ENCODE measurements at regions of chr22 and their contacts with region 1.

Region 1: GRCh38 chr22:22877523-22878210 is 9.9 kb upstream of the IGLL5 start:
- DNase-seq: peak; percentile 56 to 91 (median 81)
- ATAC-seq: peak; percentile 59
- H3K4me3 ChIP-seq: no peak overlapping the region
- H3K4me3 Mint-ChIP-seq: no peak overlapping the region
- H3K27ac ChIP-seq: no peak overlapping the region
- H3K27ac Mint-ChIP-seq: peak overlapping the region; percentile 41
- H3K4me1 ChIP-seq: no peaks in the 10 kb centered on the region
- H3K4me1 Mint-ChIP-seq: peaks cover 7% of the 10 kb centered on the region
- H3K27me3 ChIP-seq: no peaks in the 10 kb centered on the region
- H3K27me3 Mint-ChIP-seq: no peaks in the 10 kb centered on the region
- CTCF ChIP-seq: peak; percentile 78

Region 2: GRCh38 chr22:22770280-22770871 is 107.3 kb before region 1 on chr22:
- CTCF ChIA-PET with region 1: interaction called, 18 read pairs
- POLR2A ChIA-PET with region 1: no interaction called
- intact Hi-C with region 1: no loop called
- DNase-seq: peak in 6 of 9 experiments; percentile 41 to 66 (median 59)
- ATAC-seq: peak; percentile 70
- H3K4me3 ChIP-seq: no peak overlapping the region
- H3K4me3 Mint-ChIP-seq: no peak overlapping the region
- H3K27ac ChIP-seq: peak overlapping the region in 1 of 2 experiments; percentile 60
- H3K27ac Mint-ChIP-seq: peak overlapping the region; percentile 73
- H3K4me1 ChIP-seq: no peaks in the 10 kb centered on the region
- H3K4me1 Mint-ChIP-seq: peaks cover 56% of the 10 kb centered on the region
- H3K27me3 ChIP-seq: no peaks in the 10 kb centered on the region
- H3K27me3 Mint-ChIP-seq: no peaks in the 10 kb centered on the region
- CTCF ChIP-seq: peak; percentile 74

Region 3: GRCh38 chr22:22855617-22856308 is 21.9 kb before region 1 on chr22:
- CTCF ChIA-PET with region 1: interaction called, 26 read pairs
- POLR2A ChIA-PET with region 1: no interaction called
- intact Hi-C with region 1: loop called in 1 of 2 experiments (anchors 2 kb)
- DNase-seq: peak in 8 of 9 experiments; percentile 19 to 69 (median 40)
- ATAC-seq: peak; percentile 49
- H3K4me3 ChIP-seq: no peak overlapping the region
- H3K4me3 Mint-ChIP-seq: no peak overlapping the region
- H3K27ac ChIP-seq: no peak overlapping the region
- H3K27ac Mint-ChIP-seq: no peak overlapping the region
- H3K4me1 ChIP-seq: no peaks in the 10 kb centered on the region
- H3K4me1 Mint-ChIP-seq: peaks cover 1% of the 10 kb centered on the region
- H3K27me3 ChIP-seq: no peaks in the 10 kb centered on the region
- H3K27me3 Mint-ChIP-seq: no peaks in the 10 kb centered on the region
- CTCF ChIP-seq: peak; percentile 35

Measured in CD8-positive, alpha-beta T cell (primary cell).